H1 (cell line): ENCODE measurements at regions of chrX and their contacts with region 1.

Region 1: DNA sequence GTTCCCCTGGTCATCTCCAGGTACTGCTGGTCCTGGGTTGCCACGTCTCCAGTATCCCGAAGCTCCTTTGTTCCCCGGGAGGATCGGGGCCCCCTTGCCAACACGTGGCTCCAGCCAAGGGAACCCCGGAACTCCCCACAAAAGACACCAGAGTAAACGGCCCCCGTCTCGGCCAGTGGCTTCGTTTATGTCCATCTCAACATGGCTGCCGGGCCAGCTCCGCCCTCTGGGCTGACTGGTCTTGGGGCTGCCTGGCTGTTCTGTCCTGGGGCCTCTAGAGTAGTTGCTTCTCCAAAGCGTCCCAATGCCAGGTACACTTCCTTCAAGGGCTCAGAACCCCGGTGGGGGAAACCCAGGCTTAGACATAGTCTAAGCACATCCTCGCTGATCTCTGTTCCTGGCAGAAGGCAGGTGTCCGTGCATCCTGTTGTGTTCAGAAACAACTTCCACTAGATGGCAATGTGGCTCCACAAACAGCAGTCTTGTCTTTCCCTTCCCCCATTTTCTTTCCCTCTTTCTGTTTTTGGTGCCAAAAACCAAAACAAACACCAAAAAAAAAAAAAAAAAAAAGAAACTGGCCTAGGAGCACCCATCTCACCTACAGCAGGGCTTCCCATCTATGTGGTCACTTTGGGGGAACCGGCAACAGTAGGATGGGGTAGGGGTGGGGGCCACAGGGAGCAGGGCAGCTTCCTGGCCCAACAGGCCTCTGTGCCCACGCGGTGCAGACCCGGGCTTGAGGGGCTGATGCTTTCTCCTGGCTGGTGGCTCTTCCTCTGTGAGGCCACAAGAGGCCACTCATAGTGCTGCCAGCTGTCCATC is 35.3 kb downstream of the NBDY start:
- DNase-seq: peak in 1 of 2 experiments; percentile 53
- H3K4me3 ChIP-seq: no peak overlapping the region
- H3K27ac ChIP-seq: no peak overlapping the region
- H3K4me1 ChIP-seq: peaks cover 0 to 11% (median 2%) of the 10 kb centered on the region in 4 experiments; a peak in 4 of 7 replicates
- H3K27me3 ChIP-seq: no peaks in the 10 kb centered on the region
- CTCF ChIP-seq: peak; percentile 34 to 50 (median 48)
- EP300 ChIP-seq: no peak
- POLR2A ChIP-seq: no peak
- RAD21 ChIP-seq: peak; percentile 72 to 74

Region 2: GRCh38 chrX:56744996-56745395 is 19.4 kb before region 1 on chrX:
- CTCF ChIA-PET with region 1: no interaction called
- POLR2A ChIA-PET with region 1: no interaction called
- DNase-seq: no peak
- H3K4me3 ChIP-seq: no peak overlapping the region
- H3K27ac ChIP-seq: no peak overlapping the region
- H3K4me1 ChIP-seq: no peaks in the 10 kb centered on the region
- H3K27me3 ChIP-seq: no peaks in the 10 kb centered on the region
- CTCF ChIP-seq: no peak
- EP300 ChIP-seq: no peak
- POLR2A ChIP-seq: no peak
- RAD21 ChIP-seq: no peak

Region 3: GRCh38 chrX:56978172-56978571 is 213.8 kb after region 1 on chrX:
- CTCF ChIA-PET with region 1: interaction called, 11 read pairs
- POLR2A ChIA-PET with region 1: no interaction called
- DNase-seq: no peak
- H3K4me3 ChIP-seq: no peak overlapping the region
- H3K27ac ChIP-seq: no peak overlapping the region
- H3K4me1 ChIP-seq: no peaks in the 10 kb centered on the region
- H3K27me3 ChIP-seq: no peaks in the 10 kb centered on the region
- CTCF ChIP-seq: peak in 2 of 3 experiments; percentile 51 to 59; a peak in 2 of 4 replicates
- EP300 ChIP-seq: no peak
- POLR2A ChIP-seq: no peak
- RAD21 ChIP-seq: peak; percentile 70 to 77